Left colon (tissue), 2 donors: ENCODE measurements at regions of chr1 and their contacts with region 1.

Region 1: GRCh38 chr1:229339520-229339919 is 3.3 kb downstream of the CCSAP start:
- DNase-seq: no peak
- ATAC-seq: no peak

Region 2: DNA sequence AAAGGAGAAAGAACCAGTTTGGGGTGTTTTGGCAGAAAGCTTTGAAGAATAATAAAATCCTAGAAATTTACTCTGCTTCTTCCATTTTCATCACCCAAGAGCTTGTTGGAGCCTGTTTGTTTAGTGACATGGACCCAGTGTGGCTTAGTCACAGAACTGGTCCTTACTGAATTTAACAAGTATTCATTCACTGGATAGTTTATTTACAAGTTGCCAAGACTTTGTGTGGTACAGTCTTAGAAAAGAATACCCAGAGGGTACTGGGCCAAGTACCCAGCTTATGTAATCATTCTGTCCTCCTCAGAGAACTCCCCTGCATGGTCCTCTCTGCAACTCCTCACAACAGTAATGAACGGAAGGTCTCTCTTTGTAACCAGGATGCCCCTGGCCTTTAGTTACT is 52.3 kb before region 1 on chr1:
- intact Hi-C with region 1: loop called in 1 of 2 experiments (anchors 10 kb)
- DNase-seq: no peak
- ATAC-seq: no peak